ENCODE measurements at regions of chr10 and their contacts with region 1.

Region 1: DNA sequence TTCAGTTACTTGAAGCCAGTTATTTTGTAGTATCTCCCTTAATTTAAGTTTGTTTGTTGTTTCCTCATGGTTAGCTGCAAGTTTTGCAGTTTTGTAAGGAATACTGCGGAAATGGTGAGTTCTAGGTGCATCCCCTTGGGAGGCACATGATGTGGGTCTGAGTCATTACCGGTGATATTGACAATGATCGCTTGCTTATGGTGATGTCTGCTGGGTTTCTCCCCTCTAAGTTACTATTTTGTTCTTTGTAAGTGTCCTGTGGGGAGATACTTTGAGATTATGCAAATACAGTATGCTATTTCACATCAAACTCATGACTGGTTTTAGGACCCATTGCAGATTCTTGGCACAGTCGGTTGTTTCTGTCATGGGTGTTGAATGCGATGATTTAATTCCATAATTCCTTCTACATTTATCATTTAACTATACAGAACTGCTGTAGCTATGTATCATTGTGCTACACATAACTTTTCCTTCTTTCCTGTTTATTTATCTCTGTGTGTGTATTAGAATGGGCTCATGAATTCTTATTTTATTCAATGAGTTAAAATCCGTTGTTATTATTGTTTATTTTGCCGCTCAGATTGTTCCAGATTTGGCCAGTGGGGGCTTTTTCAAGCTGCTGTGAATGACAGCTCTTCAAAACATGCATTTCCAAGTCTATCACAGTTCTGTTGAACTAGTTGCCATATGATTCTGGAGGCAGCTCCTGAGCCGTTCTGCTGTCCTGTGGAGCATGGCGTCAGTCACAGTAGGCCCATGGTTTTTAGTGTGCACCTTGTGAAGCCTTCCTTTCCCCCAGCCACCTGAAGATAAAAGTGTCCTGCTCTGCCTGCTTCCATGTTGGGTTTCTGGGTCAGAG is 18.4 kb downstream of the TSPAN14 start:
- DNase-seq: peak; percentile 70
- H3K4me3 Mint-ChIP-seq: peak overlapping the region; percentile 27
- H3K27ac Mint-ChIP-seq: peak overlapping the region; percentile 99
- H3K4me1 Mint-ChIP-seq: peaks cover 88% of the 10 kb centered on the region
- H3K27me3 Mint-ChIP-seq: no peaks in the 10 kb centered on the region

Region 2: DNA sequence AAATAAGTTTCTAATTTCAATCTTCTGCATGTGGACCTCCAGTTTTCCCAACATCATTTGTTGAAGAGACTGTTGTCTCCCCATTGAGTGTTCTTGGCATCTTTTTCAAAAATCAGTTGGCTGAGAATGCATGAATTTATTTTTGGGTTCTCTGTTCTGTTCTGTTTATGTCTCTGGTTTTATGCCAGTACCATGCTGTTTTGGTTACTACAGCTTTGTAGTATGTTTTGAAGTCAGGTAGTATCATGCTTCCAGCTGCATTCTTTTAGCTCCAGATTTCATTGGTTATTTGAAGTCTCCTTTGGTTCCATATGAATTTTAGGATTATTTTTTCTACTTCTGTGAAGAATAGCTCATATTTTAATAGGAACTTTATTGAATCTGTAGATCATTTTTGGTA is 502.4 kb before region 1 on chr10:
- CTCF ChIA-PET with region 1: no interaction called
- POLR2A ChIA-PET with region 1: no interaction called
- intact Hi-C with region 1: no loop called
- DNase-seq: no peak
- H3K4me3 Mint-ChIP-seq: no peak overlapping the region
- H3K27ac Mint-ChIP-seq: no peak overlapping the region
- H3K4me1 Mint-ChIP-seq: no peaks in the 10 kb centered on the region
- H3K27me3 Mint-ChIP-seq: peaks cover 25% of the 10 kb centered on the region

Region 3: GRCh38 chr10:80459047-80459931 is 13.2 kb before region 1 on chr10:
- CTCF ChIA-PET with region 1: interaction called, 18 read pairs
- POLR2A ChIA-PET with region 1: interaction called, 16 read pairs
- intact Hi-C with region 1: loop called (anchors 1 kb)
- DNase-seq: peak; percentile 85
- H3K4me3 Mint-ChIP-seq: peak overlapping the region; percentile 77
- H3K27ac Mint-ChIP-seq: peak overlapping the region; percentile 97
- H3K4me1 Mint-ChIP-seq: peaks cover 84% of the 10 kb centered on the region
- H3K27me3 Mint-ChIP-seq: no peaks in the 10 kb centered on the region

Measured in activated CD4-positive, alpha-beta memory T cell treated with anti-CD3 and anti-CD28 coated beads for 36 hours (primary cell).